Caco-2 (cell line): ENCODE measurements at regions of chr12 and their contacts with region 1.

Region 1: DNA sequence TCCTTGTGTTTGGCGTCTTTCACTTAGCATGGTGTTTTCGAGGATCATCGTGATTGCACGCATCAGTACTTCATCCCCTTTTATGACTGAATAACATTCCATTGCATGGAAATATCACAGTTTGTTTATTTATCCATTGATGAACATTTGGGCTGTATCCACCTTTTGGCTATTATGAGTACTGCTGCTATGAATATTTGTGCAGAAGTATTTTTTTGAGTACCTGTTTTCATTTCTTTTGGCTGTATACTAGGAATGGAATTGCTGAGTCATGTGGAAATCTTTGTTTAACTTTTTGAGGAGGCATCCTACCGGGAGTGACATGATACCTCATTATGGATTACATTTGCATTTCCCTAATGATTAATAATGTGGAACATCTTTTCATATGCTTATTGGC is 66.4 kb downstream of the WNK1 start:
- DNase-seq: no peak
- H3K4me3 ChIP-seq: no peak overlapping the region
- H3K4me3 Mint-ChIP-seq: no peak overlapping the region
- H3K27ac Mint-ChIP-seq: no peak overlapping the region
- H3K4me1 ChIP-seq: no peaks in the 10 kb centered on the region
- H3K4me1 Mint-ChIP-seq: peaks cover 5% of the 10 kb centered on the region
- H3K27me3 ChIP-seq: no peaks in the 10 kb centered on the region
- H3K27me3 Mint-ChIP-seq: no peaks in the 10 kb centered on the region
- CTCF ChIP-seq: peak in 1 of 2 experiments; percentile 18

Region 2: DNA sequence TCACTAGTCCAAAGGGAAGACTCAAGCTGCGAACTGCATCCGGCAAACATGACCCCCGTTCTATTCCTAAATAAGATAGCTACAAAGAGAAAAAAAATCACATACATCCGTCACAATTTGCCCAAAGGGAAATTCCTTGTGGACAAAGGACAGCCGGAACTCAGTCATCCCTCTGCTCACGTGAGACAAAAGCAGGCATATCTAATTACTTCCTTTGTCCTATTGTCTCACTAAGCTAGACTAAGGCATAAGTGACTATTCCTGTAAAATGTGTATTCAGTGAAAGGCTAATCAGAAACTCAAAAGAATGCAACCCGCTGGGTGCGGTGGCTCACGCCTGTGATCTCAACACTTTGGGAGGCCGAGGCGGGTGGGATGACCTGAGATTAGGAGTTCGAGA is 128.3 kb before region 1 on chr12:
- CTCF ChIA-PET with region 1: no interaction called
- POLR2A ChIA-PET with region 1: no interaction called
- intact Hi-C with region 1: no loop called
- DNase-seq: no peak
- H3K4me3 ChIP-seq: no peak overlapping the region
- H3K4me3 Mint-ChIP-seq: no peak overlapping the region
- H3K27ac Mint-ChIP-seq: no peak overlapping the region
- H3K4me1 ChIP-seq: no peaks in the 10 kb centered on the region
- H3K4me1 Mint-ChIP-seq: peaks cover 8% of the 10 kb centered on the region
- H3K27me3 ChIP-seq: no peaks in the 10 kb centered on the region
- H3K27me3 Mint-ChIP-seq: no peaks in the 10 kb centered on the region
- CTCF ChIP-seq: no peak

Region 3: DNA sequence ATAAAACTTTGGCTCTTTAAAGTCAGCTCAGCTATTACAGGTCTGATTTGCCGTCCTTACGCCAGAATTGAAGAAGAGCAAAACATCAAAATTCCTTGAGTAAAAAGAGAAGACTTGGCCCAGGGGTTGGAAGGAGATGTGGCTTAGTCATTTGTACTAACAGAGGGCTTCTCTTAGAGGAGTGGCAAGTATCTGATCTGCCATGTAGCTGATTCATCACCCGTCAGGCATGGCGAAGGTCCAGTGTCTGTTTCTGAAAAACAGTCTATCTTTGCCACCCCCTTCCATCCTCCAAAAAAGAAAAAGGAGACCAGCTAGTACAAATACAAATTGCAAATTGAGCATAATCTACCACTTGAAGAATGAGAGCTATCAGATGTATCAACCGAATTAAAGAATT is 38.9 kb after region 1 on chr12:
- CTCF ChIA-PET with region 1: no interaction called
- POLR2A ChIA-PET with region 1: no interaction called
- intact Hi-C with region 1: loop called (anchors 5 kb)
- DNase-seq: no peak
- H3K4me3 ChIP-seq: no peak overlapping the region
- H3K4me3 Mint-ChIP-seq: no peak overlapping the region
- H3K27ac Mint-ChIP-seq: no peak overlapping the region
- H3K4me1 ChIP-seq: no peaks in the 10 kb centered on the region
- H3K4me1 Mint-ChIP-seq: peaks cover 7% of the 10 kb centered on the region
- H3K27me3 ChIP-seq: no peaks in the 10 kb centered on the region
- H3K27me3 Mint-ChIP-seq: no peaks in the 10 kb centered on the region
- CTCF ChIP-seq: no peak

Region 4: GRCh38 chr12:868722-869121 is 50.0 kb after region 1 on chr12:
- CTCF ChIA-PET with region 1: no interaction called
- POLR2A ChIA-PET with region 1: no interaction called
- intact Hi-C with region 1: no loop called
- DNase-seq: peak in 1 of 2 experiments; percentile 31
- H3K4me3 ChIP-seq: no peak overlapping the region
- H3K4me3 Mint-ChIP-seq: no peak overlapping the region
- H3K27ac Mint-ChIP-seq: no peak overlapping the region
- H3K4me1 ChIP-seq: no peaks in the 10 kb centered on the region
- H3K4me1 Mint-ChIP-seq: no peaks in the 10 kb centered on the region
- H3K27me3 ChIP-seq: no peaks in the 10 kb centered on the region
- H3K27me3 Mint-ChIP-seq: no peaks in the 10 kb centered on the region
- CTCF ChIP-seq: peak; percentile 23 to 44